K562 (cell line): ENCODE measurements at regions of chr3 and their contacts with region 1.

Region 1: DNA sequence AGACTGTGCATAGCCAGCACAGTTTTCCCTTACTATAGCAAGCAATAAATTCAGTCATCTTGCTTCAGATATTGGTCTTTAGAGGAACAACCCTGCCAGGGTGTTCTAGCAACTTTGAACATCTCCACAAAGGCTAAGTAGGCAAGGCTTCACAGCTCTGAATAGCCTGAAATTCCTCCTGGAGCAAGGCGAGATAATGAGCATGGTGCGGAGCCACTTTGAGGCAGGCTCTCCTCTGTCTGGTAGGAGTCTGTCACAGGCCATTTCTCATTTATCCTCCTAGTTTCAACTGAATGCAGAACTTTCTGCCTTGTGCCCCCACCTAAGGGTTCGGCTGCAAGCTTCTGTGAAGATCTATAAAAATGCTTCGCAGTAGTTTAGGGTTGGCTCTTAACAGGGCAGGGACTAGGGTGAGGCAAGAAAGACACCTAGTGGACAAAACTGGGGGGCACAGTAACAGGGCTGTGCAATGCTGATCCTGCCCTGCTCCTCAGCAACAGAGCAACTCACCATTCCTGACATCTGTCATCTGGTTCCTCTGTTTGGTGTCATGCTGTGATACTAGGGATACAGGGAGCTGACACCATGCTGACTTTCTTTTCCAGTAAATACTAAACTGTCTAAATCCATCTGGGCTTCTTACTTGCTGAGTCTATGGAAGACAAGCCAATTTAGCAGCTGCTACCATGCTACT is 16.6 kb upstream of the EHHADH start:
- DNase-seq: peak; percentile 54 to 70 (median 62)
- ATAC-seq: peak; percentile 100
- H3K4me3 ChIP-seq: no peak overlapping the region
- H3K27ac ChIP-seq: no peak overlapping the region
- H3K4me1 ChIP-seq: peaks cover 0 to 10% of the 10 kb centered on the region in 2 experiments; a peak in 2 of 5 replicates
- H3K27me3 ChIP-seq: no peaks in the 10 kb centered on the region; a peak in 1 of 5 replicates
- CTCF ChIP-seq: peak; percentile 73 to 79 (median 76)
- EP300 ChIP-seq: no peak
- POLR2A ChIP-seq: no peak
- RAD21 ChIP-seq: peak; percentile 68 to 85

Region 2: DNA sequence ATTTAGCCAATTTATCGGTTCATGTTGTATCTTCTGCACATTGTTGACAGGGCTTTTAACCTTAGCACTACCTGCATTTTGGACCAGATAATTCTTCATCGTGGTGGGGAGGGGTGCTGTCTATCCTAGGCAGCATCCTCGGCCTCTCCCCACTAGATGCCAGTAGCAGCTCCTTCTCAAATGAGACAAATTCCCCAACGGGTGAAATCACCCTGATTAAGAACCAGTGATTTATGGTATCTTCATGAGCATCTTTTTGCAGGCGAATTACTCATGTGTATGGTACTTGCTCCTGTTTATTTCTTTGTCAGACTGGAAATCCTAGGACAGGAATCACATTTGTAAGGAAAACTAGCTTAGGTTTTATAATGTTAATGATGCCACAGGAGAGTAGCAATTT is 185.5 kb before region 1 on chr3:
- CTCF ChIA-PET with region 1: no interaction called
- POLR2A ChIA-PET with region 1: no interaction called
- in situ Hi-C with region 1: no loop called
- intact Hi-C with region 1: loop called (anchors 10 kb)
- DNase-seq: no peak
- ATAC-seq: no peak
- H3K4me3 ChIP-seq: no peak overlapping the region
- H3K27ac ChIP-seq: no peak overlapping the region
- H3K4me1 ChIP-seq: no peaks in the 10 kb centered on the region; a peak in 1 of 5 replicates
- H3K27me3 ChIP-seq: peaks cover 20 to 36% of the 10 kb centered on the region in 2 experiments
- CTCF ChIP-seq: no peak
- EP300 ChIP-seq: no peak
- POLR2A ChIP-seq: no peak
- RAD21 ChIP-seq: no peak

Region 3: DNA sequence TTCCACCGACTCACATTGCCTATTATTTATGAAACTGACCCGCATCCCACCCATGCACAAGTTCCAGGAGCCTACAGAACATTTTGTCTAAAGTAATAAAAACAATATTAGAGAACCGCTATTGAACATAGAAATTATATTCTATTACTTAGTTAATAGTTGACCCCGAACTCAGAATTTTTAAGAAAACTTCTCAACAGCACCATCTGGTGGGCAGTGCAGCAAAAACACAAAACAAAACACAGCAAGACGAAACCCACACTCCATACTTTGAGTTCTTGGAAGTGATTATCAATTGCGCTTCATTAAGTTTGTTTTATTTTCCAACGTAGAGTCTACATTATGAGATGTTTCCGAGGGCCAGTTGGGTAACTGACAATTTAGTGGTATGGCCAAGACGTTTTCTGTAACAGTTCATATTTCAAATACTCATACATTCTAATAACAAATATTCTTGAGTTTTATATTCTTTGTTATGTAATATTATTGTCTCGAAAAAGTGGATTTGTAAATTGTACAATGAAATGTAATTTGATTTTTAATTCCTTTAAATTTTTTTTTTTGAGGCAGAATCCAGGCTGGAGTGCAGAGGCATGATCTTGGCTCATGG is 93.6 kb before region 1 on chr3:
- CTCF ChIA-PET with region 1: no interaction called
- POLR2A ChIA-PET with region 1: no interaction called
- in situ Hi-C with region 1: no loop called
- intact Hi-C with region 1: loop called (anchors 2 kb)
- DNase-seq: peak; percentile 24 to 66 (median 35)
- ATAC-seq: peak; percentile 39; the same call in 1 of the 3 replicates
- H3K4me3 ChIP-seq: no peak overlapping the region
- H3K27ac ChIP-seq: no peak overlapping the region
- H3K4me1 ChIP-seq: peaks cover 7 to 13% of the 10 kb centered on the region in 2 experiments; a peak in 4 of 5 replicates
- H3K27me3 ChIP-seq: peaks cover 8 to 13% of the 10 kb centered on the region in 2 experiments; a peak in 4 of 5 replicates
- CTCF ChIP-seq: peak; percentile 49 to 72 (median 65); a peak in 5 of 6 replicates
- EP300 ChIP-seq: no peak
- POLR2A ChIP-seq: no peak
- RAD21 ChIP-seq: peak; percentile 72 to 77

Region 4: DNA sequence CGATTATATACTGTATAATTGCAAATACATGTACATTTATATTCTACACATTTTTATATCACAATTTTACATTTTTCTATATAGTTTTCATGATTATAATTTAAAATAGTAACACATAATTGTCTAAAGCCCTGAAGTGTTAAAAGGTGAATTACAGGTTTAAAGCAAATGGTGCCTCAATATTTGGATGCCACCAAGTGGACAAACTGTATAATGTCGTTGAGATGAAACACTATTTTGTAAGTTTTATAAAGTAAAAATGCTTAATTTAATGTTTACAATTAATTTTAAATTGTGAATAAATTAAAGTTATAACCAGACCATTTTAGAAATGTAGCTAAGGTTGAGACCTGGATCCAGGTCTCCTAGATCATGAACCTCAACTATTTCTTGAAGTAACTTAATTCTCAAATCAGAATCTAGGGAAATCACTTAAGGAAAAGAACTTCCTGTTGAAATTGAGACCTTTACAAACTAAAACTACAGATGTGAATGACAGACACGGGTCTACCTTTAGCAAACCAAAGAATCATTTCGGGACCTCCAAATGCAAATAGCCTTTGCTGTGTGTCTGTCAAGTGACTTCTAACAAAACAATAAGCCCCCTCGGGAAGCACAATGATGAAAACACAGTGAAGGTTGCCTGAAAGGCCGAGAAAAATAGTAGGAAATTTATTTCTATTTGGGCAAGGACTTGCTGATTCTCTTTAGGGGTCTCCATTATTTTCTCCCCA is 54.4 kb before region 1 on chr3:
- CTCF ChIA-PET with region 1: no interaction called
- POLR2A ChIA-PET with region 1: no interaction called
- in situ Hi-C with region 1: no loop called
- intact Hi-C with region 1: loop called (anchors 2 kb)
- DNase-seq: peak in 3 of 4 experiments; percentile 18 to 32 (median 20)
- ATAC-seq: 0 out of 3 replicates have a peak, but pooled peaks have one; percentile 51
- H3K4me3 ChIP-seq: no peak overlapping the region
- H3K27ac ChIP-seq: no peak overlapping the region
- H3K4me1 ChIP-seq: no peaks in the 10 kb centered on the region
- H3K27me3 ChIP-seq: no peaks in the 10 kb centered on the region
- CTCF ChIP-seq: peak in 2 of 3 experiments; percentile 45 to 72; a peak in 4 of 6 replicates
- EP300 ChIP-seq: no peak
- POLR2A ChIP-seq: no peak
- RAD21 ChIP-seq: peak; percentile 77 to 82

Region 5: GRCh38 chr3:185233328-185233727 is 37.1 kb before region 1 on chr3:
- CTCF ChIA-PET with region 1: no interaction called
- POLR2A ChIA-PET with region 1: no interaction called
- in situ Hi-C with region 1: no loop called
- intact Hi-C with region 1: no loop called
- DNase-seq: no peak
- ATAC-seq: no peak
- H3K4me3 ChIP-seq: no peak overlapping the region
- H3K27ac ChIP-seq: no peak overlapping the region
- H3K4me1 ChIP-seq: no peaks in the 10 kb centered on the region
- H3K27me3 ChIP-seq: no peaks in the 10 kb centered on the region
- CTCF ChIP-seq: no peak
- EP300 ChIP-seq: no peak
- POLR2A ChIP-seq: no peak
- RAD21 ChIP-seq: no peak

Region 6: DNA sequence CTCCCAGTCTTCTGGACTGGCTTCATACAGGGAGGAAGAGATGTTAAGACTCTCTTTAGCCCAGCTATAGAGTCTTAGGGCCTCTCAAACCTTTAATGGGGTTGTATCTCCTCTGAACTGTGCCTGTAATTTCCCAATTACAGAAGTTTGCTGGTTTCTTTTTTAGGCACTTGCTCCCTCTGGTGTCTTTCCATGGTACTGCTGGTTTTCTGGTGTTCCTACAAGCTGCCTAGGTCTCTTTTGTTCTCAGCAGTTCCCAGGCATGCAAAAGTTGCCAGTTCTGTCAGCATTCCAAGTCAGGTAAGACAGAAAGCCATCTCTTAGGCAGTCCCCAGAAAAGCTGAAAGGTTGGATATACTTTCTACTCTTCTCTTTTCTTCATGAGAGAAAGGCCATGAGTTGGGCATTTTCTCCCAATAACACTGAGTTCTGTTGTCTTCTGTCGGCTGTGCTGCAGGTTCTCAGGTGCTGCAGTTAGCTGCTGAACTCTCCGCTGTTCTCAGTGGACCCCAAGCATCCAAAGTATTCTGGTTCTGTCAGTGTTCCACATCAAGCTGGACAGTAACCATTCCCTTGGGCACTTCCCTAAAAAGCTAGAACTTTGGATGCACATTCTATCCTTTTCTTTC is 37.8 kb after region 1 on chr3:
- CTCF ChIA-PET with region 1: no interaction called
- POLR2A ChIA-PET with region 1: no interaction called
- in situ Hi-C with region 1: no loop called
- intact Hi-C with region 1: loop called (anchors 5 kb)
- DNase-seq: peak; percentile 62 to 79 (median 62)
- ATAC-seq: peak; percentile 85
- H3K4me3 ChIP-seq: no peak overlapping the region
- H3K27ac ChIP-seq: no peak overlapping the region
- H3K4me1 ChIP-seq: no peaks in the 10 kb centered on the region
- H3K27me3 ChIP-seq: no peaks in the 10 kb centered on the region
- CTCF ChIP-seq: peak; percentile 77 to 86 (median 82)
- EP300 ChIP-seq: no peak
- POLR2A ChIP-seq: no peak
- RAD21 ChIP-seq: peak; percentile 71 to 85